Lower leg skin (tissue), 4 donors: ENCODE measurements at regions of chr20 and their contacts with region 1.

Region 1: DNA sequence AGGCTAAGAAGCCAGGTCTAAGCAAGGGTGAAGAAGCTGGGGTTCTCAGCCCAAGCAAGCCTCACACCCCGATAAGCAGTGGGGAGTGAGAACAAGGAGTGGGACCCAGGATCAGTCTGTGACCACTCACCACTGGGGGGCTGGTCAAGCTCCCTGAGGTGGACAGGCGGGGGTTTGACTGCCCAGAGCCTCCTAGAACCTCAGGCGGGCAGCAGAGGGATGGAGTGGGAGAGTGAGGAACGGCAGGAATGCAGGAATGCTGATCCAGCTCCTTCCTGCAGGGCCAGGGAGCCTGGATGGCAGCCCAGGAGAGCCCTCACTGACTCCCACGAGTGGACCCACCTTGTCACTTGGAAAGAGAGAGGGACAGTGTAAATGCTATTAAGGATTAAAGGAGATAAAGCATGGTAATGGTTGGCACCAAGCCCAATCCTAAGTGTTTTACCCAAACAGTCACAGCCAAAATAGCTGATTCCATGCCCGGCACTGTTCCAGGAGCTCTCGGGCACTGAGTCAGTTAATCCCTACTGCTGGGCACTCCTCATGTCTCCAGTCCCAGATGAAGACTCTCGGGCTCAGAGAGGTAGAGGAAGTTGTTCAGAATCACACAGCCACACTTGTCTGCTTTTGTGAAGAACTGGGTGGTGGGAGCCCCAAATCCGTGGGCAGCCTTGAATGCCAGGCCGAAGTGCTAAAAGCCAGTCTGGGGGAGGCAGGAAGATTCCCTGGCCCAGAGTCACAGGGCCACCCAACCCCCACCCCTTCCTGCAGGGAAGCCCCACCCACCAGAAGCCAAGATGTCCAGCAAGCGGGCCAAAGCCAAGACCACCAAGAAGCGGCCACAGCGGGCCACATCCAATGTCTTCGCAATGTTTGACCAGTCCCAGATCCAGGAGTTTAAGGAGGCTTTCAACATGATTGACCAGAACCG is 3.0 kb downstream of the MYL9 start:
- DNase-seq: no peak
- H3K4me3 ChIP-seq: no peak overlapping the region
- CTCF ChIP-seq: no peak
- POLR2A ChIP-seq: no peak

Region 2: GRCh38 chr20:36573103-36573794 is 28.9 kb after region 1 on chr20 and contains the start of gene TGIF2:
- intact Hi-C with region 1: no loop called
- DNase-seq: peak; percentile 55 to 95
- H3K4me3 ChIP-seq: peak within 1 kb of the TSS; percentile 68
- CTCF ChIP-seq: no peak
- POLR2A ChIP-seq: no peak
- total RNA-seq, gene TGIF2: 6.5 to 10.5 (median 9.5) TPM

Region 3: DNA sequence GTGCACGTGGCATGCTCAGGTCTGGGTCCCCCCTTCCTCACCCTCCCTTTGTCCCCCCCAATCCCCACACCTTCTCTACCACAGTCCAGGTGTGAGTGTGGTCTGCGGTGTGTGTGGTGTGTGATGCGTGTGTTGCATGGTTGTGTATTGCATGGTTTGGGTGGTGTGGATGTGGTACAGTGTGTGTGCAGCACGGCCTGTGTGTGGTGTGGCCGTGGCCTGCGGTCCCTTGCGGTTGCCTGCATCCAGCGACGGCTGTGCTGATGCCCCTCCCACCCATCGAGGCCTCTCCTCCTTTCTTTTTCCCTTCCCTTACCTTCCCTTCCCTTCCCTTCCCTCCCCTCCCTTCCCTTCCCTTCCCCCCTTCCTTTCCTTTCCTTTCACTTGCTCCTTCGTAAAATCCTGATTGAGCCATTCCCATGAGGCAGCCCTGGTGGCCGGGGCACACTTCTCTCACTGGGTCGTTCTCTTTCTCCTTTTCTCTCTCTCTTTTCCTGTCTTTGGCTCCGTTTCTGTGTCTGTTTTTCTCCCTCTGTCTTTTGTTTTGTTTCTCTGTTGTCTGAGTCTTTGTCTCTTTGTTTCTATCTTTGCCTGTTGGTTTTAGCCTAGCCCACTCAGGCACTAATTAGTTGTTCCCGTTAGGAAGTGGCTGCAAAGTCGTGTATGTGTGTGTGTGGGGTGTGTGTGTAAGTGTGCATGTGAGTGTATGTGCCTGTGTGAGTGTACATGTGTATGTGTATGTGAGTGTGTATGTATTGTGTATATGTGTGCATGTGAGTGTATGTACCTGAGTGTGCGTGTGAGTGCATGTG is 867.3 kb after region 1 on chr20:
- intact Hi-C with region 1: loop called (anchors 5 kb)
- DNase-seq: no peak
- H3K4me3 ChIP-seq: no peak overlapping the region
- CTCF ChIP-seq: peak in 1 of 3 donors; percentile 82
- POLR2A ChIP-seq: no peak